Activated CD4-positive, alpha-beta memory T cell treated with anti-CD3 and anti-CD28 coated beads, Interleukin-2, amount 10 ng/mL, durations not matched to agents 7 days and 5 days (primary cell): ENCODE measurements at regions of chr2 and their contacts with region 1.

Region 1: DNA sequence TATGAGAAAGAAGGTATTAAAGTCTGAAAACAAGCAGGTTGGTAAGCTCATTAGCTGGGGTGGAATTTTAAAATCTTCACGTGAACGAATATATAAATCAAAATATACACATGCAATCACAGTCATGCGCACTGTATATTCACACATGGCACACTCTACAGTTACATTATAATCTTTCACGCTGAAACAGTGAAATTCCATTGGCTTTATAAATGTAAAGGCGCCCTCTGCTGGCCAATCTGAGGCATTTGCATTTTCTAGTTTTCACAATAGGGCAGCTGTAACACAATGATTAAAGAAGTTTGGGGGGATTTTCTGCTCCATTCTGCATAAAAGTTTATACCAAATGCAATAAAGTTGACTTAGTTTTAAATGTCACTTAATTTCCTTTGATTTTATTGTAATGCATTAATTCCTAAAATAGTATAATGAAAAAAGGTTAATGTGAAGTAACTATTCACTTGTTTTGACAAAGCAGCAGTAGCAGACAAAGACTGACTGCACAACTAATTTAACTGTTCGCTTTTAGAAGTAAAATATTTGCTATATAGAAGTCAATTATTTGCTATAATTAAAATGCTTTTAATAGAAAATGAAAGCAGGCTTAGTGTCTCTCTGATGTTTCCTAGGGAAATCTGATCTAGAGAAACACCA is 17.2 kb downstream of the IFIH1 start:
- DNase-seq: peak; percentile 62
- H3K4me3 Mint-ChIP-seq: no peak overlapping the region
- H3K27ac Mint-ChIP-seq: no peak overlapping the region
- H3K4me1 Mint-ChIP-seq: peaks cover 2% of the 10 kb centered on the region
- H3K27me3 Mint-ChIP-seq: no peaks in the 10 kb centered on the region

Region 2: GRCh38 chr2:162153608-162154224 is 147.6 kb before region 1 on chr2:
- CTCF ChIA-PET with region 1: interaction called, 15 read pairs
- POLR2A ChIA-PET with region 1: no interaction called
- DNase-seq: peak; percentile 63
- H3K4me3 Mint-ChIP-seq: no peak overlapping the region
- H3K27ac Mint-ChIP-seq: no peak overlapping the region
- H3K4me1 Mint-ChIP-seq: peaks cover 1% of the 10 kb centered on the region
- H3K27me3 Mint-ChIP-seq: peaks cover 33% of the 10 kb centered on the region

Region 3: GRCh38 chr2:162333968-162334367 is 32.7 kb after region 1 on chr2:
- CTCF ChIA-PET with region 1: interaction called, 10 read pairs
- POLR2A ChIA-PET with region 1: no interaction called
- DNase-seq: no peak
- H3K4me3 Mint-ChIP-seq: no peak overlapping the region
- H3K27ac Mint-ChIP-seq: no peak overlapping the region
- H3K4me1 Mint-ChIP-seq: peaks cover under 1% of the 10 kb centered on the region
- H3K27me3 Mint-ChIP-seq: no peaks in the 10 kb centered on the region

Region 4: GRCh38 chr2:162382278-162382677 is 81.0 kb after region 1 on chr2:
- CTCF ChIA-PET with region 1: no interaction called
- POLR2A ChIA-PET with region 1: no interaction called
- DNase-seq: no peak
- H3K4me3 Mint-ChIP-seq: no peak overlapping the region
- H3K27ac Mint-ChIP-seq: no peak overlapping the region
- H3K4me1 Mint-ChIP-seq: no peaks in the 10 kb centered on the region
- H3K27me3 Mint-ChIP-seq: peaks cover 5% of the 10 kb centered on the region